OCI-LY7 (cell line): ENCODE measurements at regions of chr1 and their contacts with region 1.

Region 1: GRCh38 chr1:67741121-67741520 is 56.1 kb downstream of the GADD45A start:
- DNase-seq: no peak
- H3K4me3 ChIP-seq: no peak overlapping the region
- H3K27ac ChIP-seq: peak overlapping the region; percentile 84
- H3K4me1 ChIP-seq: peaks cover 78% of the 10 kb centered on the region
- CTCF ChIP-seq: 0 out of 2 replicates have a peak, but pooled peaks have one; percentile 2

Region 2: GRCh38 chr1:67674260-67675011 is 66.7 kb before region 1 on chr1:
- CTCF ChIA-PET with region 1: no interaction called
- POLR2A ChIA-PET with region 1: interaction called, 38 read pairs
- intact Hi-C with region 1: loop called (anchors 2 kb)
- DNase-seq: peak; percentile 77
- H3K4me3 ChIP-seq: peak overlapping the region; percentile 20
- H3K27ac ChIP-seq: peak overlapping the region; percentile 85
- H3K4me1 ChIP-seq: peaks cover 48% of the 10 kb centered on the region
- CTCF ChIP-seq: no peak

Region 3: GRCh38 chr1:67723620-67724019 is 17.5 kb before region 1 on chr1:
- CTCF ChIA-PET with region 1: no interaction called
- POLR2A ChIA-PET with region 1: interaction called, 84 read pairs
- intact Hi-C with region 1: no loop called
- DNase-seq: no peak
- H3K4me3 ChIP-seq: no peak overlapping the region
- H3K27ac ChIP-seq: no peak overlapping the region
- H3K4me1 ChIP-seq: peaks cover 35% of the 10 kb centered on the region
- CTCF ChIP-seq: no peak

Region 4: GRCh38 chr1:67889953-67890567 is 148.9 kb after region 1 on chr1:
- CTCF ChIA-PET with region 1: no interaction called
- POLR2A ChIA-PET with region 1: no interaction called
- intact Hi-C with region 1: no loop called
- DNase-seq: no peak
- H3K4me3 ChIP-seq: no peak overlapping the region
- H3K27ac ChIP-seq: no peak overlapping the region
- H3K4me1 ChIP-seq: no peaks in the 10 kb centered on the region
- CTCF ChIP-seq: no peak